ENCODE measurements at regions of chr10 and their contacts with region 1.

Region 1: DNA sequence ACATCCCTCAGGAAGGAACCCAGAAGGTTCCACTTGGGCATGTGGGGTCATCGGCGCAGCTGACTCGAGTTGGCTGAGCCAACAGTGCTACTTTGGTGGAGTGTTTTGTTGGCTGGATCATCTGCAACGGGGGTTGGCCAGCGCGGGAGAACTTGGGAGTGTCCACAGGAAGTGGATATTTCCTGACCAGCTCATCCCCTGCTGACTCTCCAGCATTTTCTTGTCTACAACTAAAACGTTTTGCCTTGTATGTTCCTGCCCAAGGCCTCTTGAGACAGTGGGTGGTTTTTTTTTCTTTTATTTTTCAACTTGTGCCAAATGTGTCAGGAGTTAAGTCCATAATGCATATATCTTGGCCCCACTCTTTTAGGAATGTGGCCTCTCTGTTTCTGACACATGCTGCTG is 208.6 kb downstream of the ZNF365 start:
- DNase-seq: peak; percentile 68 to 71
- ATAC-seq: peak; percentile 61 to 91 (median 82)
- H3K4me3 ChIP-seq: no peak overlapping the region
- H3K27ac ChIP-seq: peak overlapping the region in 9 of 10 donors; percentile 18 to 84 (median 65)
- H3K4me1 ChIP-seq: peaks cover 0 to 39% (median 18%) of the 10 kb centered on the region in 9 donors
- H3K27me3 ChIP-seq: peaks cover 0 to 6% (median 0%) of the 10 kb centered on the region in 7 donors
- CTCF ChIP-seq: no peak

Region 2: DNA sequence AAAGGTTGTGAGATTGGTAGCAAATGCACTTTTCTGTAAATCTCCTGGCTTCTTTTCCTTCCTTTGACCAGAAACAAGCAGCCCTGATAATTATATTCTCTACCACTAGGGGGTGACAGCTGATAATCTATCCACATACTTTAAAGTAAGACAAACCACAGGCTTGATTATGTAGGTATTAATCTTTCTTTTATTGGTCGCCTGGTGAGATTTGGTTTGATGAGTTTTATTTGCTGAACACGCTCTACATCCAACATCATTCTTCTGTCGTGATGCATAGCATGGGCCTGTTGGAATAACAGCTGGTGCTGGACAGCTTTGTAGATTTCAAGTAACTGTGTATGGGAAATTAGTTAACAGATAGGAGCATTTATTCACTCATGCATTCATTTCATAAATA is 145.1 kb before region 1 on chr10:
- intact Hi-C with region 1: loop called in 3 of 10 experiments (anchors 10 kb)
- DNase-seq: peak in 1 of 2 donors; percentile 29
- ATAC-seq: peak in 4 of 8 donors; percentile 56 to 69 (median 63)
- H3K4me3 ChIP-seq: no peak overlapping the region
- H3K27ac ChIP-seq: no peak overlapping the region
- H3K4me1 ChIP-seq: peaks cover 0 to 11% (median 0%) of the 10 kb centered on the region in 9 donors
- H3K27me3 ChIP-seq: peaks cover 0 to 7% (median 0%) of the 10 kb centered on the region in 7 donors
- CTCF ChIP-seq: peak; percentile 52 to 88 (median 74)

Region 3: DNA sequence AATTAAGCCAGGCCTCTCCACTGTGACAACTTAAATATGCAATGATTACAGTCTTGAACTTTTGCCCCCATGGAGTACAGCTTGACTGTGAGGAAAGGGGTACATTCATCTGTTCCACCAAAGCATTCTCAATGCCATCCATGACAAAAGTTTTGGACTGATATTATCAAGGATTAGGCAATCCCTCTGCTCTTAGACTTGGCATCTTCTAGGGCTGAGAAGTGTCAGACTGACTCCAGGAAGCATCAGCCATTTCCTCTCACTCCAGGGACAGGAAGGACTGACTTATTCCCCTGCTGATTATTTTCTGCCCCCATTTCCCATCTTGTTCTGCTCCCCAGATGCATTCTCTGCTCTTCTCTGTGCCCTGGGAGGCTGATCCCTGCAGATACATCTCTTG is 138.9 kb before region 1 on chr10:
- intact Hi-C with region 1: loop called in 3 of 10 experiments (anchors 10 kb)
- DNase-seq: no peak
- ATAC-seq: peak in 1 of 8 donors; percentile 44
- H3K4me3 ChIP-seq: no peak overlapping the region
- H3K27ac ChIP-seq: no peak overlapping the region
- H3K4me1 ChIP-seq: peaks cover 0 to 10% (median 0%) of the 10 kb centered on the region in 9 donors
- H3K27me3 ChIP-seq: peaks cover 0 to 4% (median 0%) of the 10 kb centered on the region in 7 donors
- CTCF ChIP-seq: no peak

Region 4: GRCh38 chr10:62456611-62457101 is 126.2 kb before region 1 on chr10:
- intact Hi-C with region 1: loop called in 1 of 10 experiments (anchors 10 kb)
- DNase-seq: no peak
- ATAC-seq: peak in 4 of 8 donors; percentile 24 to 53 (median 42)
- H3K4me3 ChIP-seq: no peak overlapping the region
- H3K27ac ChIP-seq: peak overlapping the region in 4 of 10 donors; percentile 11 to 66 (median 24)
- H3K4me1 ChIP-seq: peaks cover 0 to 29% (median 0%) of the 10 kb centered on the region in 9 donors
- H3K27me3 ChIP-seq: peaks cover 0 to under 1% (median 0%) of the 10 kb centered on the region in 7 donors
- CTCF ChIP-seq: no peak

Measured in heart right ventricle (tissue), 16 donors.